Right cardiac atrium (tissue), 5 donors: ENCODE measurements at regions of chr16 and their contacts with region 1.

Region 1: GRCh38 chr16:31032736-31033708 is at the start of gene STX4:
- DNase-seq: peak; percentile 97 to 99 (median 99)
- ATAC-seq: peak; percentile 96
- H3K4me3 ChIP-seq: peak within 1 kb of the TSS; percentile 85
- H3K27ac ChIP-seq: peak within 1 kb of the TSS; percentile 81
- H3K4me1 ChIP-seq: no peaks in the 10 kb centered on the region
- H3K27me3 ChIP-seq: no peaks in the 10 kb centered on the region
- total RNA-seq, gene STX4: 39.6 to 51.3 (median 45.0) TPM

Region 2: GRCh38 chr16:31073968-31074813 is 41.2 kb after region 1 on chr16 and contains the starts of genes ZNF646 and ZNF668:
- intact Hi-C with region 1: loop called in 1 of 4 experiments (anchors 5 kb)
- DNase-seq: peak; percentile 99
- ATAC-seq: peak; percentile 96
- H3K4me3 ChIP-seq: peak within 1 kb of the TSS; percentile 94
- H3K27ac ChIP-seq: peak within 1 kb of the TSS; percentile 95
- H3K4me1 ChIP-seq: peaks cover 7% of the 10 kb centered on the region
- H3K27me3 ChIP-seq: no peaks in the 10 kb centered on the region
- total RNA-seq, gene ZNF646: 7.8 to 10.3 (median 9.3) TPM
- total RNA-seq, gene ZNF668: 4.6 to 6.6 (median 4.9) TPM

Region 3: GRCh38 chr16:31215287-31216162 is 182.5 kb after region 1 on chr16:
- intact Hi-C with region 1: no loop called
- DNase-seq: peak; percentile 65 to 81 (median 81)
- ATAC-seq: peak; percentile 90 to 92
- H3K4me3 ChIP-seq: peak overlapping the region; percentile 14
- H3K27ac ChIP-seq: no peak overlapping the region
- H3K4me1 ChIP-seq: peaks cover 5% of the 10 kb centered on the region
- H3K27me3 ChIP-seq: no peaks in the 10 kb centered on the region